Naive thymus-derived CD4-positive, alpha-beta T cell (primary cell): ENCODE measurements at regions of chr1 and their contacts with region 1.

Region 1: DNA sequence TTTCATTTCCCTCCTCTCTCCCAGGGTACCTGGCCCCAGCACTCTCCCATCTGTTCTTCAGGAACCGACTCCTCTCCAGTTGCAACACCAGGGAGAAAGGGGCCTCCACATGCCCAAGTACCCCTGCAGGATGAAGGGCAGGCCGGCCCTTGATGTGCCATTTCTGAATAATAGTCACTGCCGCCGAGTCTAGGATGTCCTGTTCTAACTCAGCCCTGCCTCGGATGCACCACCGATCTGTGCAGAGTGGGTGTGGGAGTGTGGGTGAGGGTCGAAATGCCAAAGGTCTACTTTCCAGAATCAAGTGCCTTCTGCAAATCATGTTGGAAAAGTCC is 25.4 kb upstream of the SPSB1 start:
- DNase-seq: no peak
- ATAC-seq: no peak
- H3K4me3 ChIP-seq: no peak overlapping the region
- H3K4me3 Mint-ChIP-seq: no peak overlapping the region
- H3K27ac ChIP-seq: no peak overlapping the region
- H3K27ac Mint-ChIP-seq: peak overlapping the region in 2 of 9 donors; percentile 69 to 89
- H3K4me1 ChIP-seq: no peaks in the 10 kb centered on the region
- H3K4me1 Mint-ChIP-seq: peaks cover 3 to 12% (median 5%) of the 10 kb centered on the region in 7 donors
- H3K27me3 ChIP-seq: no peaks in the 10 kb centered on the region
- H3K27me3 Mint-ChIP-seq: no peaks in the 10 kb centered on the region

Region 2: DNA sequence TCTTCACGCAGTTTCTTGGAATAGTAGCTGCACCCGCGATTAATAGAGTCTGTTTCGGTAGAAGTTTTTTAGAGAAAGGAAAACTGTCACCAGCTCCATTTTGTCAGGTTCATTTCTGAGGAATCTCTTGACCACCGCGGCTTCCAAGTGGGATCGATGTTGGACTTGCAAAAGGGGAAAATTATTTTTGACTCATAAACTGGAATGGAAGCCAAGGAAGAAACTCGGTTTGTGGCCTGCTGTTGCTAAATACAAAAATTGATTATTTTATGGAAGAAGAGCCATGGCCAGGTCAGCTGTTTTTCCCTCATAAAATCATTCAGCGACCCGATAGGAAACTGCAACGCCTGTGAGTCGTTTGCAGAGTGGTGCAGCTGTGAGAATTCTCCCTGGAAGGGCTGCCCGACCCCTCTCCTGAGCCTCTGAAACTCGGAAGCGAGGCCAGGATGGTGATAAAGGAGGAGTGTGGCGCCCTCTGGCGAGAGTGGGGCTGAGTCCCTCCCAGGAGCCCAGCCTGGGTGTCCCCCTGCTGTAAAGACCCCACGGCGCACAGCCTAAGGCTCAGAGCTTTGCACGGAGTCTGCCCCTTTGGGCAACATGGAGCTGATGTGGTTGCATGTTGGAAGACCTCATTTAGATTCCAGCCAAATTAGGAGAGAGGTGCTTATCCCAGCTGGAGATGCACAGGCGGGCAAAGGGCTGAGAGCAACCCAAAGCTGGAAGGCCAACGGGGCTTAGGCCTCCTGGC is 188.3 kb after region 1 on chr1:
- CTCF ChIA-PET with region 1: interaction called, 4 read pairs
- POLR2A ChIA-PET with region 1: no interaction called
- intact Hi-C with region 1: loop called (anchors 1 kb)
- DNase-seq: peak; percentile 26 to 70 (median 58)
- ATAC-seq: peak; percentile 76
- H3K4me3 ChIP-seq: no peak overlapping the region
- H3K4me3 Mint-ChIP-seq: no peak overlapping the region
- H3K27ac ChIP-seq: no peak overlapping the region
- H3K27ac Mint-ChIP-seq: peak overlapping the region in 1 of 9 donors; percentile 48
- H3K4me1 ChIP-seq: no peaks in the 10 kb centered on the region
- H3K4me1 Mint-ChIP-seq: no peaks in the 10 kb centered on the region
- H3K27me3 ChIP-seq: no peaks in the 10 kb centered on the region
- H3K27me3 Mint-ChIP-seq: peaks cover 0 to 22% (median 0%) of the 10 kb centered on the region in 5 donors

Region 3: DNA sequence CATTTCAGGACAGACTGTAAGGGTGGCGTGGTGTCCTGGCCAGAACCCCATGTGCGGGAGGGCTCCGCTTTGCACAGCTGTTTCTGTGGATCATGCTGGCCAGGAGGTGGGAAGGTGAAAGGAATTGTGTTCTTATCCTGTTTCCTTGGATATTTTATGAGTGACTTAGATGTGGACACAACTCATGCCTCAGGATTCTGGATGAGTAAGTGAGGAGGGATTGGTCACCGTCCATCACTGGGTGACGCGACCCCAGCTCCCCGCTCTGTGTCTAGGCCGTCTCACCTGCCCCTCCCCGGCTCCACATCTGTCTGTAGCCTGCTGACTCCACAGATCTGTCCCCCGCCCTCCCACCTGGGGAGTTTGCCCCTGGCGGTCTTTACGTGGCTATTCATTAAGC is 433.0 kb after region 1 on chr1:
- CTCF ChIA-PET with region 1: no interaction called
- POLR2A ChIA-PET with region 1: no interaction called
- intact Hi-C with region 1: no loop called
- DNase-seq: no peak
- ATAC-seq: no peak
- H3K4me3 ChIP-seq: no peak overlapping the region
- H3K4me3 Mint-ChIP-seq: peak overlapping the region in 5 of 10 donors; percentile 8 to 54 (median 27)
- H3K27ac ChIP-seq: no peak overlapping the region
- H3K27ac Mint-ChIP-seq: peak overlapping the region in 6 of 9 donors; percentile 56 to 83 (median 75)
- H3K4me1 ChIP-seq: peaks cover 22 to 44% of the 10 kb centered on the region in 2 donors
- H3K4me1 Mint-ChIP-seq: peaks cover 39 to 80% (median 66%) of the 10 kb centered on the region in 7 donors
- H3K27me3 ChIP-seq: no peaks in the 10 kb centered on the region
- H3K27me3 Mint-ChIP-seq: no peaks in the 10 kb centered on the region